Endothelial cell of umbilical vein (primary cell): ENCODE measurements at regions of chr6 and their contacts with region 1.

Region 1: GRCh38 chr6:21742238-21742660 is 148.7 kb downstream of the SOX4 start:
- DNase-seq: peak; percentile 89
- H3K4me3 ChIP-seq: peak overlapping the region in 1 of 3 experiments; percentile 53
- H3K27ac ChIP-seq: peak overlapping the region; percentile 95
- H3K4me1 ChIP-seq: peaks cover 37% of the 10 kb centered on the region
- H3K27me3 ChIP-seq: no peaks in the 10 kb centered on the region
- CTCF ChIP-seq: no peak
- POLR2A ChIP-seq: no peak

Region 2: GRCh38 chr6:21522797-21523456 is 219.3 kb before region 1 on chr6:
- CTCF ChIA-PET with region 1: no interaction called
- POLR2A ChIA-PET with region 1: no interaction called
- dilution Hi-C with region 1: no loop called
- intact Hi-C with region 1: no loop called
- DNase-seq: no peak
- H3K4me3 ChIP-seq: no peak overlapping the region
- H3K27ac ChIP-seq: no peak overlapping the region
- H3K4me1 ChIP-seq: no peaks in the 10 kb centered on the region
- H3K27me3 ChIP-seq: peaks cover 0 to 4% of the 10 kb centered on the region in 2 experiments
- CTCF ChIP-seq: peak in 1 of 2 donors; percentile 8
- POLR2A ChIP-seq: no peak

Region 3: GRCh38 chr6:21615504-21615903 is 126.7 kb before region 1 on chr6:
- CTCF ChIA-PET with region 1: no interaction called
- POLR2A ChIA-PET with region 1: no interaction called
- dilution Hi-C with region 1: no loop called
- intact Hi-C with region 1: loop called (anchors 5 kb)
- DNase-seq: peak; percentile 89
- H3K4me3 ChIP-seq: no peak overlapping the region
- H3K27ac ChIP-seq: peak overlapping the region; percentile 87
- H3K4me1 ChIP-seq: peaks cover 20% of the 10 kb centered on the region
- H3K27me3 ChIP-seq: no peaks in the 10 kb centered on the region
- CTCF ChIP-seq: no peak
- POLR2A ChIP-seq: no peak

Region 4: GRCh38 chr6:21664314-21665109 is 77.7 kb before region 1 on chr6:
- CTCF ChIA-PET with region 1: no interaction called
- POLR2A ChIA-PET with region 1: no interaction called
- dilution Hi-C with region 1: no loop called
- intact Hi-C with region 1: loop called (anchors 2 kb)
- DNase-seq: peak; percentile 61
- H3K4me3 ChIP-seq: peak overlapping the region; percentile 47 to 59 (median 55)
- H3K27ac ChIP-seq: peak overlapping the region; percentile 22
- H3K4me1 ChIP-seq: peaks cover 24% of the 10 kb centered on the region
- H3K27me3 ChIP-seq: no peaks in the 10 kb centered on the region
- CTCF ChIP-seq: no peak
- POLR2A ChIP-seq: no peak

Region 5: GRCh38 chr6:21731411-21732031 is 10.7 kb before region 1 on chr6:
- CTCF ChIA-PET with region 1: interaction called, 22 read pairs
- POLR2A ChIA-PET with region 1: interaction called, 5 read pairs
- dilution Hi-C with region 1: no loop called
- intact Hi-C with region 1: no loop called
- DNase-seq: peak; percentile 22
- H3K4me3 ChIP-seq: no peak overlapping the region
- H3K27ac ChIP-seq: no peak overlapping the region
- H3K4me1 ChIP-seq: peaks cover 26% of the 10 kb centered on the region
- H3K27me3 ChIP-seq: no peaks in the 10 kb centered on the region
- CTCF ChIP-seq: no peak
- POLR2A ChIP-seq: no peak

Region 6: GRCh38 chr6:21754891-21755290 is 12.6 kb after region 1 on chr6:
- CTCF ChIA-PET with region 1: interaction called, 15 read pairs
- POLR2A ChIA-PET with region 1: no interaction called
- dilution Hi-C with region 1: no loop called
- intact Hi-C with region 1: no loop called
- DNase-seq: peak; percentile 31
- H3K4me3 ChIP-seq: no peak overlapping the region
- H3K27ac ChIP-seq: peak overlapping the region; percentile 64
- H3K4me1 ChIP-seq: peaks cover 48% of the 10 kb centered on the region
- H3K27me3 ChIP-seq: no peaks in the 10 kb centered on the region
- CTCF ChIP-seq: no peak
- POLR2A ChIP-seq: no peak

Region 7: DNA sequence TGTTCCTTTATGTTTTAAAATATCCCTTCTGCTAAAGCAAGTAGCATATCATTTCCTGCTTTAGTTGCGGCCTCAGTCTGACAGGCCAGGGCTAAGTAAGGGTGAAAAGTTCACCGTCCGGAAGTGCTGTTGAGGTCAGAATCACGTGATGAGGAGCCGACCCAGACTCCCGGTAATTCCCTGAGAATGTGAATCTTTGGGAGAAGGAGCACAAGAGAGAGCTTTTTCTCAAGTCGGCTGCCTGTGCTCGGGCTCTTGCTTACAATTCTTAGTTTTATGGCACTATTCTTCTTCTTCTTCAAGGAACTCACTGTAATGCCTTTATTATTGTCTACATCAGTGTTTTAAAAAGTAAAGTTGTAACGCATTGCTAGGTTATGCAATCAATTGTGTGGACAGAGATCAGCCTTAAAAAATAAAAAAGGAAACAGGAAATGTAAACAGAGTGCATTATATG is 245.3 kb after region 1 on chr6:
- CTCF ChIA-PET with region 1: no interaction called
- POLR2A ChIA-PET with region 1: no interaction called
- dilution Hi-C with region 1: no loop called
- intact Hi-C with region 1: loop called (anchors 1 kb)
- DNase-seq: peak; percentile 96
- H3K4me3 ChIP-seq: peak overlapping the region in 1 of 3 experiments; percentile 26
- H3K27ac ChIP-seq: peak overlapping the region; percentile 88
- H3K4me1 ChIP-seq: peaks cover 33% of the 10 kb centered on the region
- H3K27me3 ChIP-seq: no peaks in the 10 kb centered on the region
- CTCF ChIP-seq: no peak
- POLR2A ChIP-seq: peak; percentile 21